Activated CD4-positive, alpha-beta memory T cell treated with anti-CD3 and anti-CD28 coated beads for 36 hours (primary cell): ENCODE measurements at regions of chr13 and their contacts with region 1.

Region 1: GRCh38 chr13:99656092-99656745 is 154.9 kb downstream of the TM9SF2 start:
- DNase-seq: peak; percentile 88
- H3K4me3 Mint-ChIP-seq: no peak overlapping the region
- H3K27ac Mint-ChIP-seq: peak overlapping the region; percentile 38
- H3K4me1 Mint-ChIP-seq: peaks cover 42% of the 10 kb centered on the region
- H3K27me3 Mint-ChIP-seq: no peaks in the 10 kb centered on the region

Region 2: GRCh38 chr13:99542788-99543406 is 113.3 kb before region 1 on chr13:
- CTCF ChIA-PET with region 1: no interaction called
- POLR2A ChIA-PET with region 1: no interaction called
- intact Hi-C with region 1: loop called (anchors 5 kb)
- DNase-seq: peak; percentile 78
- H3K4me3 Mint-ChIP-seq: no peak overlapping the region
- H3K27ac Mint-ChIP-seq: peak overlapping the region; percentile 24
- H3K4me1 Mint-ChIP-seq: peaks cover 51% of the 10 kb centered on the region
- H3K27me3 Mint-ChIP-seq: no peaks in the 10 kb centered on the region

Region 3: DNA sequence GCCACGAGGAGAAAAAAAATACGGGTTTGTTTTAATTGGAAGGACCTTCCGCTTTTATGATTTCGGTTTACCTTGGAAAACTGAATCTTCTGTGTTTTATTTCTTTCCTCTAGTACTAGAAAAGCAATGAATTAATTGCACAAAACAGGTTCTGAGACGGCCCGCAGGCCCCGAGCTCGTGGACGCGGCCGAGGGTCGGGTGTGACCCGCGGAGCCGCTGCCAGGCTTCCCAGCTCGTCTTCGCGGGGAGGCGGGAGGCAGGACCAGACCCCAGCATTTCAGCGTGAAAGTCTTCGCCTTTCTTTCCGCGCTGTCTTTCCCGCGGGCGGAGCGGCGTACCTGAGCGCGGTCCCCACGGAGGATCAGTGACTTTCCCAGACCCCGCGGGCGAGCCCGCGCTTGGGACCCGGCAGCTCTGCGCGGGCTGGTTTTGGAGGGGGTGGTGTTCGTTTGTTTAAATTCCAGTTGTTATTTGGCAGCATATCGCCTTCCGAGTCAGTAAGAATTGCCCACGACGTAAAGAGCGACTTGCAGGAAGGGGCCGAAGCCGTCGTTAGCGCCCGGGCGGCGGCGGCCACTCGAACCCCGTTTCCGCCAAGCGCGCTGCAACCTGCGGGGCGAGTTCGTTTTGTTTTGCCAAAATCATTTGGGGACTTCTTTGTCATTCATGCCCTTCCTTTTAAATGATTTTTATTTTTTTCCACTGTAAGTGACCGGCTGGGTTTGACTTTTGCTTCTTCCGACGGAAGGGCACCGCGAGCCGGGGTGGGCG is 239.2 kb after region 1 on chr13:
- CTCF ChIA-PET with region 1: interaction called, 22 read pairs
- POLR2A ChIA-PET with region 1: no interaction called
- intact Hi-C with region 1: loop called (anchors 5 kb)
- DNase-seq: no peak
- H3K4me3 Mint-ChIP-seq: peak overlapping the region; percentile 59
- H3K27ac Mint-ChIP-seq: no peak overlapping the region
- H3K4me1 Mint-ChIP-seq: peaks cover 9% of the 10 kb centered on the region
- H3K27me3 Mint-ChIP-seq: peaks cover 39% of the 10 kb centered on the region

Region 4: GRCh38 chr13:99959538-99960230 is 303.5 kb after region 1 on chr13:
- CTCF ChIA-PET with region 1: interaction called, 4 read pairs
- POLR2A ChIA-PET with region 1: no interaction called
- intact Hi-C with region 1: loop called (anchors 5 kb)
- DNase-seq: no peak
- H3K4me3 Mint-ChIP-seq: peak overlapping the region; percentile 12
- H3K27ac Mint-ChIP-seq: no peak overlapping the region
- H3K4me1 Mint-ChIP-seq: peaks cover 29% of the 10 kb centered on the region
- H3K27me3 Mint-ChIP-seq: peaks cover 73% of the 10 kb centered on the region

Region 5: GRCh38 chr13:100392709-100393641 is 736.8 kb after region 1 on chr13:
- CTCF ChIA-PET with region 1: interaction called, 3 read pairs
- POLR2A ChIA-PET with region 1: no interaction called
- intact Hi-C with region 1: loop called (anchors 1 kb)
- DNase-seq: peak; percentile 85
- H3K4me3 Mint-ChIP-seq: no peak overlapping the region
- H3K27ac Mint-ChIP-seq: peak overlapping the region; percentile 26
- H3K4me1 Mint-ChIP-seq: peaks cover 27% of the 10 kb centered on the region
- H3K27me3 Mint-ChIP-seq: no peaks in the 10 kb centered on the region

Region 6: GRCh38 chr13:100588331-100589177 is 932.3 kb after region 1 on chr13 and contains the start of gene GGACT:
- CTCF ChIA-PET with region 1: interaction called, 8 read pairs
- POLR2A ChIA-PET with region 1: no interaction called
- intact Hi-C with region 1: loop called (anchors 5 kb)
- DNase-seq: peak; percentile 89
- H3K4me3 Mint-ChIP-seq: peak within 1 kb of the TSS; percentile 73
- H3K27ac Mint-ChIP-seq: peak within 1 kb of the TSS; percentile 85
- H3K4me1 Mint-ChIP-seq: peaks cover 39% of the 10 kb centered on the region
- H3K27me3 Mint-ChIP-seq: no peaks in the 10 kb centered on the region
- total RNA-seq, gene GGACT: 5.8 to 7.0 TPM